ENCODE measurements at regions of chr12 and their contacts with region 1.

Region 1: DNA sequence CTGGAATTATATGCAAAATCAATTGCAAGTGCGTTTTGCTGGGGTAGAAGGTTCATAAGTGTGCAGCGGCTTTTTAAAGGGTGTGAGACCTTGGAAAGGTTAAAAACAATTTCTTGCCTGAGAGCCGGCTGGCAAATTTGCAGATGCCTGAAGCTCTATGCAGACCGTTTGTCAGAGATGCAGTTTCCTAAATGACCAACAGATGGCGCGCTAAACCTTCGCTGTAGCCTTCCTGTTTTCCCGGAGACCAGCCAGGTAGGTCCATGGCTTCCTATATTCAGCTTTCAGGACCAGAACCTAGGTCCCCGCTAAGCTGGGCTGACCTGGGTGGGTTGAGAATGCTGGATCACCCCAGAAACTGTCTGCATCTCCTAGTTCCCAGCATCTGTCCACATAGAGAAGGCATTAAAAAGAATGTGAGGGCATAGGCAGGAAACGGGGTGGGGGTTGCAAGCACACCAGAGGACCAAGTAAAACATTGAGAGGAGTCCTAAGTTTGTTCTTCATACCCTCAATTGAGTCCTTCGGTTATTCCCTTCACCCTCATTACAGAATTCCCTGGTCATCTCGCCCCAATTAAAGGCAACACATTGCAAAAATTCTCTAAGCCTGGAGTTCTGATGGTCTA is 5.7 kb upstream of the NOS1 start:
- DNase-seq: peak in 2 of 3 donors; percentile 60 to 85
- ATAC-seq: peak; percentile 79
- H3K4me3 ChIP-seq: no peak overlapping the region
- H3K4me1 ChIP-seq: no peaks in the 10 kb centered on the region
- CTCF ChIP-seq: peak; percentile 62

Region 2: GRCh38 chr12:117538032-117538690 is 171.0 kb after region 1 on chr12:
- intact Hi-C with region 1: no loop called
- DNase-seq: no peak
- ATAC-seq: no peak
- H3K4me3 ChIP-seq: no peak overlapping the region
- H3K4me1 ChIP-seq: peaks cover 4% of the 10 kb centered on the region
- CTCF ChIP-seq: no peak

Region 3: DNA sequence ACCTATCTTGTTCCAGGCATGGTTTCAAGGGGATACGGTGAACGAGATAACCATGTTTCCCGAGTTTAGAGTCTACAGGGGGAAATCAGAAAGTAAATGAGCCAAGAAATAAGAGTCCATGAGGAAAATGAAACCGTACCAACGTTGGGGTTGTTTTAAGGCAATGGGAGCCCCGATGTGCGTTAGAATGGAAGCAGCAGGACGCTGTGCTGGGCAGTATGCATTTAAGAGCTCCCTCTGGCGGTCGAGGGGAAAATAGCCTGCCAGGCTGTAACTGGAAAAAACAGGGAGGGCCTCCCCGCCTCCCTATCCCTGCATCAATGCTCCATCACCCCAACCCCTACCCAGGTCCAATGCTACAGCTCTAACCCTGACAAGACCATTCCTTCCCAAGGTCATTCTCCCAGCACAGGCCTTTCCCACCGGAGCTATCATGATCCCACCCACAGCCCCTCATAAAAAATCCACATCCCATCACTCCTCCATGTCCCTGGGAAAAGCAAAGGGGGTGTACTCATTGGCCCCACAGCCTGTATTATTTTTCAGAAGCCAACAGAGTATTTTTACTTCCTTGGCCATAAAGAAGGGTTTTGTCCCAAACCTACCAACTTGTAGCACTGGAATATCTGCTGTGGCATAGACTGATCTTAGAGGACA is 220.6 kb after region 1 on chr12:
- intact Hi-C with region 1: loop called (anchors 5 to 10 kb)
- DNase-seq: peak in 2 of 3 donors; percentile 61 to 73
- ATAC-seq: peak; percentile 76
- H3K4me3 ChIP-seq: no peak overlapping the region
- H3K4me1 ChIP-seq: no peaks in the 10 kb centered on the region
- CTCF ChIP-seq: peak; percentile 79

Region 4: DNA sequence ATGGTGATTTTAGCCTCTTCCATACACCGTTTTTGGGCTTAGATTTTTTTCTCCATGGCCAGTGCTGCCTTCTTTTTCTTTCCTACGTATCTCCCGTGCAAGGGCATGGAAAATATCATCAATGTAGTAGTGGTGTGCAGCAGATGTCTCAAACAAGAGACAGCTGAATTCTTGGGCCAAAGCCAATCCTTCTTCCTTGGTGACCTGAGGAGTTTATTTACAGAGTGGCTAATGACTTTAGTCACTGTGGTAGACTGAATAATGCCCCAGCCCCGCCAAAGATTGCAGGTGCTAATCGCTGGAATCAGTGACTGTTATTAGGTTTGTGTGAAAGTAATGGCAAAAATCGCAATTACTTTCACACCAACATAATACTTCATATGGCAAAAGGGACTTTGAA is 229.8 kb after region 1 on chr12:
- intact Hi-C with region 1: loop called in 1 of 2 experiments (anchors 10 kb)
- DNase-seq: no peak
- ATAC-seq: no peak
- H3K4me3 ChIP-seq: no peak overlapping the region
- H3K4me1 ChIP-seq: no peaks in the 10 kb centered on the region
- CTCF ChIP-seq: no peak

Region 5: DNA sequence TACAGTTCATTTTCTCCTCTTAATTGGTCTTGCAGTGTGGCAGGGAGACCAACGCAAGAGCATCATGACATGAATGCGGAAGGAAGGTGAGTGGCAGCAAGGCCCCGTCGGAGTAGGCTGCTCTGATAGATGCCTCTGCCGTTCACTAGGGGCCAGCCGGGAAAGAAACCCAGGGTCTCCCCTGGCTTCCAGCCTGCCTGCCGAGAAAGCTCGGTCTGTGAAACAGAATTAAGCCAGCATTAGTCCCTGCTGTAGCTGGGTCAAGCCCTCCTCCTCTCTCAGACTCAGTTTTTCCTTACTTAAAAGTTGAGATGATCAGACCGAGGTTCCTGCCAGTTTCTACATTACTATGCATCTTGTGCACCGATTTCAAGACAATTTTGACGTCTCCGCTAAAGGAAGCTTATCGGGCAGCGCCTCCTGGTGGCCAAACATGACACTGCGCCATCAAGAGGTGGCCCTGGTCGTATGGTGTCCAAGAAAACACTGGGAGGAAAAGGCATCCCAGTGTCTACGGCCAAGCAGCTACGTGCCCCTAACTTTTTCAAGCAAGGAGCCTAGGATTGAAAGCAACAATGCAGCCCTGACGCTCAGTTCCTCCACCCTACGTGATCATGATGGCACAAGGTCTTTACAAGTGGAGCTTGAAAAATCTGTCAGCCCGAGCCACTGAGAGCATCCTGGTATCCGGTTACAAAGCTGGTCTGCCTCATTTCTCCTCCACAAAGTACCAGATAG is 470.0 kb after region 1 on chr12:
- intact Hi-C with region 1: loop called (anchors 2 to 5 kb)
- DNase-seq: peak; percentile 69 to 90 (median 86)
- ATAC-seq: peak; percentile 89
- H3K4me3 ChIP-seq: no peak overlapping the region
- H3K4me1 ChIP-seq: no peaks in the 10 kb centered on the region
- CTCF ChIP-seq: peak; percentile 90

Measured in mucosa of descending colon (tissue), 3 donors.